Ovary (tissue), 10 donors: ENCODE measurements at regions of chr1 and their contacts with region 1.

Region 1: GRCh38 chr1:70509996-70510876 is 99.2 kb downstream of the CTH start:
- DNase-seq: peak in 1 of 5 donors; percentile 25
- H3K4me3 ChIP-seq: no peak overlapping the region
- H3K27ac ChIP-seq: no peak overlapping the region
- H3K4me1 ChIP-seq: no peaks in the 10 kb centered on the region
- H3K27me3 ChIP-seq: no peaks in the 10 kb centered on the region
- CTCF ChIP-seq: peak; percentile 55 to 69 (median 63)
- EP300 ChIP-seq: no peak
- POLR2A ChIP-seq: no peak

Region 2: DNA sequence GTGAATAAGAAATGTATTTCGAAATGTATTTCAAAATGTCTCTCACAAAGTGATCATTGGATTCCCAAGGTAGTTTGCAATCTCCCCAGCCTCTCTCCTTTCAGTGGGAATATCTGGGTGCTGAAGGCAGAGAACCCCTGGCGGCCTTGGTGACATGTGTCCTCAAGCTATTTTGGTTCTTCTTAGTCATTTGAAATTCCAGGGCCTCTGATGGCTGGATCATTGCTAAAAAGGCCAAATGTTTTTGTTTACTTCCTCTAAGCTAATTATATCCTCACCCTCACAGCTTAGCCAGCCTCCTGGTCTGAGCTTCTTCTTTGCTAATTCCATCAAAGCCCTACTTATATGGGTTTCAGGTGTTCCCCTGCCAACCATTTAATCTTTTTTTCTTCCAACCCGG is 376.1 kb before region 1 on chr1:
- intact Hi-C with region 1: loop called in 1 of 4 experiments (anchors 5 kb)
- DNase-seq: no peak
- H3K4me3 ChIP-seq: no peak overlapping the region
- H3K27ac ChIP-seq: no peak overlapping the region
- H3K4me1 ChIP-seq: no peaks in the 10 kb centered on the region
- H3K27me3 ChIP-seq: no peaks in the 10 kb centered on the region
- CTCF ChIP-seq: no peak
- EP300 ChIP-seq: no peak
- POLR2A ChIP-seq: no peak